B cell (primary cell): ENCODE measurements at regions of chr15 and their contacts with region 1.

Region 1: GRCh38 chr15:81274931-81275707 is 48.8 kb downstream of the STARD5 start:
- DNase-seq: peak; percentile 86
- ATAC-seq: peak; percentile 94
- H3K4me3 ChIP-seq: no peak overlapping the region
- H3K4me3 Mint-ChIP-seq: peak overlapping the region; percentile 38
- H3K27ac ChIP-seq: peak overlapping the region in 1 of 2 donors; percentile 10
- H3K27ac Mint-ChIP-seq: peak overlapping the region; percentile 55
- H3K4me1 ChIP-seq: peaks cover 12 to 13% of the 10 kb centered on the region in 2 donors
- H3K4me1 Mint-ChIP-seq: peaks cover 20% of the 10 kb centered on the region
- H3K27me3 ChIP-seq: no peaks in the 10 kb centered on the region
- H3K27me3 Mint-ChIP-seq: no peaks in the 10 kb centered on the region
- CTCF ChIP-seq: peak; percentile 83

Region 2: GRCh38 chr15:81296673-81297072 is 21.6 kb after region 1 on chr15:
- CTCF ChIA-PET with region 1: interaction called, 146 read pairs
- POLR2A ChIA-PET with region 1: interaction called, 14 read pairs
- intact Hi-C with region 1: loop called (anchors 1 kb)
- DNase-seq: peak; percentile 89
- ATAC-seq: peak; percentile 39
- H3K4me3 ChIP-seq: peak overlapping the region; percentile 79 to 100 (median 87)
- H3K4me3 Mint-ChIP-seq: peak overlapping the region; percentile 100
- H3K27ac ChIP-seq: peak overlapping the region; percentile 95 to 98
- H3K27ac Mint-ChIP-seq: peak overlapping the region; percentile 98
- H3K4me1 ChIP-seq: peaks cover 54 to 86% of the 10 kb centered on the region in 2 donors
- H3K4me1 Mint-ChIP-seq: peaks cover 92% of the 10 kb centered on the region
- H3K27me3 ChIP-seq: no peaks in the 10 kb centered on the region
- H3K27me3 Mint-ChIP-seq: no peaks in the 10 kb centered on the region
- CTCF ChIP-seq: no peak

Region 3: DNA sequence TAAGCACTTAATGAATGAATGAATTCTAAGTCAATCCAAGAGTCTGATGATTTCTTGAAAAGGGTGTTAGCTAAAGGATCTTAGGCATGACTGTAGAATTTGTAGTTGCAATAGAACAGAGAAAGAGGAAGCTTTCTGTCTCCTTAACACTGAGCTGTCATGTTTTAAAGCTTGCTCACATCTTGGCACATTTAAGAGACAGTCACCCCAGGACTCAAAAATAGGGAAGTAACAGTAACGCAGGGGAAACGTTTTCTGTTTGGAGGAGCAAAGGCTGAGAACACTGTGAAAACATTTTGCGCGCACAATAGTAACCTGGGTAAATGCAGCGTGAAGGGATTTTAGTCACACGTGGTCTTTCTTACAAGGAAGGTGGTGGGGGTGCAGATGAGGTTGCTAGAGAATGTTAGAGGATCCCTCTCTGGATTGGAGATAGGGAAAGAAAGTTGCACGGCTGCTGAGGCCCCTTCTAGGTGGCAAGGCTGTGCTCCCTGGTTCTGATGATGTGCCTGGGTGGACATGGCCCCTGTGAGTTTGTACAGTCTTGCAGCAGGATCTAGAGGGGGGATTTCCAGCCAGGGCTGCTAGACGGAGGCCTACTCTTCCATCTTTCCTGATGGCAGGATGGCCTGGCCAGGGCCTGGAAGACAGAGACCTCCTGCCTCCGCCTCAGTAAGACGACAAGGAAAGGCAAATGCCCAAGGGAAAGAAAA is 36.8 kb after region 1 on chr15:
- CTCF ChIA-PET with region 1: interaction called, 27 read pairs
- POLR2A ChIA-PET with region 1: interaction called, 3 read pairs
- intact Hi-C with region 1: no loop called
- DNase-seq: peak; percentile 85
- ATAC-seq: peak; percentile 86
- H3K4me3 ChIP-seq: peak overlapping the region in 3 of 5 experiments; percentile 23 to 27 (median 25)
- H3K4me3 Mint-ChIP-seq: peak overlapping the region; percentile 65
- H3K27ac ChIP-seq: peak overlapping the region; percentile 66 to 88
- H3K27ac Mint-ChIP-seq: peak overlapping the region; percentile 87
- H3K4me1 ChIP-seq: peaks cover 62 to 67% of the 10 kb centered on the region in 2 donors
- H3K4me1 Mint-ChIP-seq: peaks cover 80% of the 10 kb centered on the region
- H3K27me3 ChIP-seq: no peaks in the 10 kb centered on the region
- H3K27me3 Mint-ChIP-seq: no peaks in the 10 kb centered on the region
- CTCF ChIP-seq: no peak

Region 4: DNA sequence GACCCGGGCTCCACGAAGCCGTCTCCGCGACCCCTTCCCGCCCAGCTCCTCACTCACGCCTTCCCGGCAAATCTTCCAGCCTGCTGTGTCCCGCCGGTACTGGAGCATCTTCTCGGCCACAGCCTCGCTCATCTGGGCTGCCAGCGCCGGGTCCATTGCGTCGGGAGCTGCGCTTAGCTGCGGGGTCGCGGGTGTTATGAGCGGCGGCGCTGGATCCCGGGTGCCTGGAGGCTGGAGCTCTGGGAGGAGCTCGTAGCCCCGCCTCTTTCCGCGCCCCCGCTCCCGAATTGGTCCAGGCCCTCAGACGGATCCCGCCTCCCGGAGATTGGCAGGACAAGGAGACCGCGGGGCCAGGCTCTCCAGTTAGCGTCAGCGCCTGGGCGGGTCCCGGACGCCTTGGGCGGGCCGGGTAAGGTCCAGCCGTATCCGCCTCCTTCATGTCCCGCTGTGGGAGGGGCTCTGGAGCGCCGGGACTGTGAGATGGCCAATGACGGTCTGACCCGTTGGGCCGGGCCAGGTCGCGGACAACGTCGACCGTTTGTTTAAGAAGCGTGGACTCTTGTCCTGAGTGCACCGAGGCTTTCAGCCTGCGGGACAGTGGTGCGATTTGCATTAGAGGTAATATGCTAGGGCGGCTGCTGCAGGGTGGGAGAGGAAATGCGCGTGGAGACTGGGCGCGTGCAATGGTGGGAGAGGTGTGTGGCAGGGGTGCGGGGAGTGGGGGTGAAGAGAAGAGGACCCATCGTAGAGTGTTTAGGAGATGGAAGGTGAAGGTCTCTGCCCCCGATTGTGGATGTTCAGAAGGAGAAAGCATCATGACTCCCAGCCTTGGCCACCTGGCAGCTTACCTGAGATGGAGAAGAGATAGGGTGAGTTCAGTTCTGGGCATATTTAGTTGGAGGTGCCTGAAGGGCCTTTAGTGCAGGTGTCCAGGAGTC is 49.1 kb after region 1 on chr15 and contains the start of gene STARD5:
- CTCF ChIA-PET with region 1: interaction called, 306 read pairs
- POLR2A ChIA-PET with region 1: interaction called, 3 read pairs
- intact Hi-C with region 1: loop called (anchors 1 kb)
- DNase-seq: peak; percentile 92
- ATAC-seq: peak; percentile 99
- H3K4me3 ChIP-seq: peak within 1 kb of the TSS; percentile 54 to 79 (median 77)
- H3K4me3 Mint-ChIP-seq: peak within 1 kb of the TSS; percentile 100
- H3K27ac ChIP-seq: peak within 1 kb of the TSS; percentile 27 to 68
- H3K27ac Mint-ChIP-seq: peak within 1 kb of the TSS; percentile 95
- H3K4me1 ChIP-seq: peaks cover 18 to 32% of the 10 kb centered on the region in 2 donors
- H3K4me1 Mint-ChIP-seq: peaks cover 32% of the 10 kb centered on the region
- H3K27me3 ChIP-seq: no peaks in the 10 kb centered on the region
- H3K27me3 Mint-ChIP-seq: no peaks in the 10 kb centered on the region
- CTCF ChIP-seq: no peak
- total RNA-seq, gene STARD5: 15.7 and 17.2 TPM in 2 replicates

Region 5: GRCh38 chr15:81394603-81395002 is 119.5 kb after region 1 on chr15:
- CTCF ChIA-PET with region 1: interaction called, 125 read pairs
- POLR2A ChIA-PET with region 1: no interaction called
- intact Hi-C with region 1: no loop called
- DNase-seq: no peak
- ATAC-seq: no peak
- H3K4me3 ChIP-seq: no peak overlapping the region
- H3K4me3 Mint-ChIP-seq: no peak overlapping the region
- H3K27ac ChIP-seq: no peak overlapping the region
- H3K27ac Mint-ChIP-seq: no peak overlapping the region
- H3K4me1 ChIP-seq: no peaks in the 10 kb centered on the region
- H3K4me1 Mint-ChIP-seq: no peaks in the 10 kb centered on the region
- H3K27me3 ChIP-seq: no peaks in the 10 kb centered on the region
- H3K27me3 Mint-ChIP-seq: no peaks in the 10 kb centered on the region
- CTCF ChIP-seq: no peak

Region 6: DNA sequence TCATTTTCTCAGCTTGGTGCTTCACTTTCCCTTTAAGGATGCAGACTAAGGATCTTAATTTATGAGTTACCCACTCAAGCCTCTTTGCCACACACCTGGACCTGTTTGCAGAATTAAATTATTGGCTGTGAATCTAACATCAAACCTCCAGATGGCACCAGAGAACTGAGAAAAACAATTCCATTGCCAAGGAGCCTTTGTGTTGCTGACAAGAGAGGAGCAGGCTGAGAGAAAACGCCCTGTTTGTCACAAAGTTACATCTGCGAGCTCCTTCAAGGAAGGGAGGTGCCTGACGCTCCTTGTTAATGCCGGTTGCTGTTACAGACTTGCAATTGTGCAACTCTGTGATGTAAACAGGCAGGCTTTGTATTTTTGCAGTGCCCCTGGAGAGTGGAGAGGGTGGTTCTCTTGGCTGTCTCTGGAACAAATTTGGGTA is 135.2 kb after region 1 on chr15:
- CTCF ChIA-PET with region 1: interaction called, 17 read pairs
- POLR2A ChIA-PET with region 1: no interaction called
- intact Hi-C with region 1: no loop called
- DNase-seq: peak; percentile 47
- ATAC-seq: no peak
- H3K4me3 ChIP-seq: no peak overlapping the region
- H3K4me3 Mint-ChIP-seq: no peak overlapping the region
- H3K27ac ChIP-seq: no peak overlapping the region
- H3K27ac Mint-ChIP-seq: no peak overlapping the region
- H3K4me1 ChIP-seq: peaks cover 0 to 4% of the 10 kb centered on the region in 2 donors
- H3K4me1 Mint-ChIP-seq: peaks cover 5% of the 10 kb centered on the region
- H3K27me3 ChIP-seq: peaks cover 0 to 10% (median 0%) of the 10 kb centered on the region in 4 experiments
- H3K27me3 Mint-ChIP-seq: peaks cover 27% of the 10 kb centered on the region
- CTCF ChIP-seq: peak; percentile 59

Region 7: DNA sequence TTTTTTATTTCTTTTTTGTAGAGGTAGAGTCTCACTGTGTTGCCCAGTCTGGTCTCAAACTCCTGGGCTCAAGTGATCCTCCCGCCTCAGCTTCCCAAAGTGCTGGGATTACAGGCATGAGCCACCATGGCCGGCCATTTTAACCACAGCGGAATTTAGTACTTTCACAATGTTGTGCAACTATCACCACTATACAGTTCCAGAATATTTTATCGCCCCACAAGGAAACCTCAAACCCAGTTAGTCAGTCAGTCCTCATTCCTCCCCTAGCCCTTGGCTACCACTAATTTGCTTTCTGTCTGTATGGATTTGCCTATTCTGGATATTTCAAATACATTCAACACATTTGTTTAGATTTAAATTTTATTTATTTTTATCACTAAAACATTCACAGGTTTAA is 1692.9 kb after region 1 on chr15:
- CTCF ChIA-PET with region 1: no interaction called
- POLR2A ChIA-PET with region 1: no interaction called
- intact Hi-C with region 1: no loop called
- DNase-seq: no peak
- ATAC-seq: no peak
- H3K4me3 ChIP-seq: no peak overlapping the region
- H3K4me3 Mint-ChIP-seq: no peak overlapping the region
- H3K27ac ChIP-seq: no peak overlapping the region
- H3K27ac Mint-ChIP-seq: no peak overlapping the region
- H3K4me1 ChIP-seq: no peaks in the 10 kb centered on the region
- H3K4me1 Mint-ChIP-seq: no peaks in the 10 kb centered on the region
- H3K27me3 ChIP-seq: no peaks in the 10 kb centered on the region
- H3K27me3 Mint-ChIP-seq: no peaks in the 10 kb centered on the region
- CTCF ChIP-seq: no peak